Sigmoid colon (tissue), 7 donors: ENCODE measurements at regions of chr9 and their contacts with region 1.

Region 1: DNA sequence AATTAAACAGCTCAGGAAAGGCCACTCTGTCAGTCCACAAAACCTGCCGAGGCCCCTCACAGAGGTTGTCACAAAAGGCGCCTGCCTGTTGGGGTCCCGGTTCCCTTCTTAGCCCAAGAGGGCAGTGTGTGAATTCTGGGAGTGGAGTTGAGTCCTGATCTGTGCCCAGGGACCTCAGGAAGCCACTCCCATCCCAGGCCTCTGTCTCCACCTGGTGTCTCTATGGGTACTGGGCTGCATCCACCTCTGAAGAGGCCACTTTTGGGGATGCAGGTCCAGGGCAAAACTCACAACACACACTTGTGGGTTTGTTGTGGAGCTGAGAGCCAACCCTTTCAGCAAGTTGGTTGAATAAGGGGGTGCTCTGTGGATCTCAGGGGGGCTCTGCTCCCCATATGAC is 74.3 kb upstream of the STXBP1 start:
- DNase-seq: no peak
- H3K4me3 ChIP-seq: no peak overlapping the region
- H3K27ac ChIP-seq: peak overlapping the region; percentile 59 to 92 (median 85)
- H3K4me1 ChIP-seq: peaks cover 0 to 89% (median 82%) of the 10 kb centered on the region in 4 donors
- H3K27me3 ChIP-seq: no peaks in the 10 kb centered on the region
- CTCF ChIP-seq: peak in 1 of 4 experiments; percentile 34
- EP300 ChIP-seq: no peak
- POLR2A ChIP-seq: no peak

Region 2: DNA sequence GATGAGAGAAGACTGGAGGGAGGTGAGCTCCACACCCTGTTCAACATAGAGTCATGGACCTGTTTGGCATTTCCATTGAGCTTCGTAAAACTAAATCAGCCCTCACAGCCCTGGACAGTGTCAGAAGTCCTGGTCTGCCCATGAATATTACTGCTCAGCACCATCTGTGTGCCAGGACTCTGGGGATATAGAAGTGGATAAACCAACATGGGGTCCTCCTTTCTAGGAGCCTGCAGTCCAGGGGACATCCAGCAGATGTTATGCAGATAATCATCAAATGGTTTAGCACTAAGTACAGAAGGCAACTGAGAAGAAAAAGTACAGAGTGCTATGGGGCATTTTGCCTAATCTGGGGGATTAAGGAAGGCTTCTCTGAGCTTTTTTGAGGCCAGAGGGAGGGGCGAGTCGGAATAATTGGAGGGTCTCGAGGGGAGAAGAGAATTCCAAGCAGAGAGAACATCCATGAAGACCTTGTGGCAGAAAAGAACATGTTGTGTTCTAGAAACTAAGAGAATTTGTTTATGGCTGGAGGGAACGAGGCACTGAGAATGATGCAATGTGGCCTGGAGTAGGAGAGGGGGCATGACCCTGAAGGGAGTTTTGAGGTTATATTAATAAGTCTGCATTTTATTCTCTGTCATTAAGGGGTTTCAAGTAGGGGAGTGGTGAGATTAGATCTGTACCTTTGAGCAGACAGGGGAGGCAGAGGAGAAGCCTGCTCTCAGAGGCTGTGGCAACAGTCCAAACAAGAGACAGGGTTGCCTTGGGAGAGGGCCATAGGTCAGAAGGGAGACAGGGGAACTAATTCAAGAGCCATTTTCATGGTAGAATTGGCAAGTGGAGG is 204.3 kb before region 1 on chr9:
- intact Hi-C with region 1: no loop called
- DNase-seq: no peak
- H3K4me3 ChIP-seq: no peak overlapping the region
- H3K27ac ChIP-seq: peak overlapping the region in 3 of 4 donors; percentile 35 to 41 (median 38)
- H3K4me1 ChIP-seq: peaks cover 0 to 28% (median 21%) of the 10 kb centered on the region in 4 donors
- H3K27me3 ChIP-seq: no peaks in the 10 kb centered on the region
- CTCF ChIP-seq: no peak
- EP300 ChIP-seq: no peak
- POLR2A ChIP-seq: no peak

Region 3: GRCh38 chr9:127503947-127504782 is 33.6 kb before region 1 on chr9:
- intact Hi-C with region 1: loop called (anchors 2 kb)
- DNase-seq: peak; percentile 94
- H3K4me3 ChIP-seq: no peak overlapping the region
- H3K27ac ChIP-seq: peak overlapping the region in 3 of 4 donors; percentile 74 to 75 (median 75)
- H3K4me1 ChIP-seq: peaks cover 0 to 23% (median 14%) of the 10 kb centered on the region in 4 donors
- H3K27me3 ChIP-seq: no peaks in the 10 kb centered on the region
- CTCF ChIP-seq: peak; percentile 86 to 96 (median 88)
- EP300 ChIP-seq: no peak
- POLR2A ChIP-seq: no peak

Region 4: GRCh38 chr9:127567055-127567729 is 29.4 kb after region 1 on chr9:
- intact Hi-C with region 1: loop called (anchors 2 kb)
- DNase-seq: peak; percentile 88
- H3K4me3 ChIP-seq: peak overlapping the region; percentile 73 to 92 (median 82)
- H3K27ac ChIP-seq: peak overlapping the region; percentile 89 to 97 (median 93)
- H3K4me1 ChIP-seq: peaks cover 0 to 59% (median 50%) of the 10 kb centered on the region in 4 donors
- H3K27me3 ChIP-seq: no peaks in the 10 kb centered on the region
- CTCF ChIP-seq: no peak
- EP300 ChIP-seq: no peak
- POLR2A ChIP-seq: peak in 1 of 2 donors; percentile 34

Region 5: DNA sequence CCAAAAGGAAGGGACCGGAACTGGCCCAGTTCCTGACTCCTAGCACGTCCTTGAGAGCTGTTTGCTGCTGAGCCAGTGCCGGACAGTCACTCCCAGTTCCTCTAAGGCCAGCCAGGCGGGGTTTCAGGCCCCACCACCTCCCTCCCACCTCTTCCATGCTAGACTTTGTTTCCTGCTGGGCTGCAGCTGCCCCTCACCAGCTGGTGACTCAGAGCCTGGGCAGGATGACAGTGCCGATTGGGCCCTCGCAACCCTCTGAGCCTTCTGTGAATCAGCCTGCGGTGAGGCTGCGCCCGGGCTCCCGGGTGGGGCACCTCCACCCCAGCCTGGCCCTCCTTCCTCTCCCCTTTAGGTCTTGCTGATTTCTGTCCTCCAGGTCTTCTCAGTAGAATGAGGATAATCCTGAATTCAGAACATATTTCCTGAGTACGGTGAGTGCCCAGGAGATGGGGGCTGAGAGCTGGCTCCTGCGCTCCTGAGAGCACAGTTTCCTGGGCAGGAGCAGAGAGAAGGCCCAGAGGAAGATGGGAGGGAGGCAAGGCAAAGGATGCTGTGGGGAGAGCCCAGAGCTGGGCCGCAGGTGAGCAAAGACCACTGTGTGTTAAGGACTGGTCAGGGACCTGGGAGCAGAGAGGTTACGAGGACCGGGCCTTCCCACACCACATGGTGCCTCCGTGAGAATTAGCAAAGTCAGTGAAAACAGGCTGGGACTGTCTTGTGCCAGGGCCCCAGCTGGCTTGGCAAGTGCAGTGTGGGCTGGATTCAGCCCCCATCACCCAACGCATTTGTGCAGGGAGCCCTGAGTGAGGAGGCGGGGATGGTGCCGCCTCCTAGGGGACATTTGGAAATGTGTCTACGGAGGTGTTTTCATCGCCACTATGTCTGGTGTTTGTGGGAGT is 41.4 kb after region 1 on chr9:
- intact Hi-C with region 1: loop called (anchors 5 kb)
- DNase-seq: peak; percentile 95
- H3K4me3 ChIP-seq: peak overlapping the region in 3 of 4 donors; percentile 21 to 37 (median 26)
- H3K27ac ChIP-seq: peak overlapping the region; percentile 89 to 95 (median 94)
- H3K4me1 ChIP-seq: peaks cover 0 to 49% (median 45%) of the 10 kb centered on the region in 4 donors
- H3K27me3 ChIP-seq: no peaks in the 10 kb centered on the region
- CTCF ChIP-seq: peak in 3 of 4 experiments; percentile 28 to 31 (median 31)
- EP300 ChIP-seq: no peak
- POLR2A ChIP-seq: no peak